HCT116 (cell line): ENCODE measurements at regions of chr15 and their contacts with region 1.

Region 1: GRCh38 chr15:99059010-99059981 is 45.6 kb upstream of the SYNM start:
- DNase-seq: peak; percentile 6
- ATAC-seq: peak; percentile 96
- H3K4me3 ChIP-seq: peak overlapping the region; percentile 28 to 39; a peak in 2 of 4 replicates
- H3K27ac ChIP-seq: no peak overlapping the region
- H3K4me1 ChIP-seq: peaks cover 0 to 9% of the 10 kb centered on the region in 2 experiments; a peak in 1 of 4 replicates
- H3K27me3 ChIP-seq: peaks cover 5% of the 10 kb centered on the region; the same call in 1 of the 2 replicates
- CTCF ChIP-seq: peak; percentile 14 to 58 (median 57); a peak in 4 of 6 replicates
- POLR2A ChIP-seq: no peak
- RAD21 ChIP-seq: peak; percentile 43

Region 2: DNA sequence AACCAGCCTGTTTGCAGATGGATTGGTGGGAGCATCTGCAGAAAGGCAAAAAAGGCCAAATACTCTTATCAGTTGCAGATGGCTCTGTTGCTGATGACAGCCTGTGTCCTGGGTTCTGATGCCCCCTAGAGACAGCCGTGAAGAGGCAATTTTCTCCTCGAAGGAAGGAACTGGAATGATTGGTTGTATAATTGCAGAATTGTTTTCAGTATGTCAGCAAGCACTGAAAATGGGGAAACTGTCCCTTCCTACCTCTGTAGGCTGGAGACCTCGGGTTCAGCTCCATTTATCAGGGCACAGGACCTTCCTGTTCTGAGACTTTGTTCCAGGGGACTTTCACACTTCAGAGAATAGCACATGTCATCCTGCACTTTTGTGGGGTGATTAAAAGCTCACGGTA is 154.8 kb before region 1 on chr15:
- CTCF ChIA-PET with region 1: no interaction called
- POLR2A ChIA-PET with region 1: no interaction called
- RAD21 ChIA-PET with region 1: no interaction called
- intact Hi-C with region 1: loop called (anchors 10 kb)
- DNase-seq: peak; percentile 18
- ATAC-seq: peak; percentile 92
- H3K4me3 ChIP-seq: no peak overlapping the region
- H3K27ac ChIP-seq: no peak overlapping the region
- H3K4me1 ChIP-seq: peaks cover 0 to 11% of the 10 kb centered on the region in 2 experiments; a peak in 2 of 4 replicates
- H3K27me3 ChIP-seq: no peaks in the 10 kb centered on the region
- CTCF ChIP-seq: peak; percentile 60 to 77 (median 73); a peak in 5 of 6 replicates
- POLR2A ChIP-seq: no peak
- RAD21 ChIP-seq: peak; percentile 77

Region 3: GRCh38 chr15:99076552-99077308 is 17.4 kb after region 1 on chr15:
- CTCF ChIA-PET with region 1: interaction called, 11 read pairs
- POLR2A ChIA-PET with region 1: no interaction called
- RAD21 ChIA-PET with region 1: no interaction called
- intact Hi-C with region 1: no loop called
- DNase-seq: peak; percentile 68
- ATAC-seq: peak; percentile 96
- H3K4me3 ChIP-seq: peak overlapping the region; percentile 14 to 48; a peak in 3 of 4 replicates
- H3K27ac ChIP-seq: no peak overlapping the region
- H3K4me1 ChIP-seq: peaks cover 0 to 2% of the 10 kb centered on the region in 2 experiments; a peak in 2 of 4 replicates
- H3K27me3 ChIP-seq: no peaks in the 10 kb centered on the region
- CTCF ChIP-seq: peak; percentile 80 to 88 (median 83)
- POLR2A ChIP-seq: no peak
- RAD21 ChIP-seq: peak; percentile 96

Region 4: DNA sequence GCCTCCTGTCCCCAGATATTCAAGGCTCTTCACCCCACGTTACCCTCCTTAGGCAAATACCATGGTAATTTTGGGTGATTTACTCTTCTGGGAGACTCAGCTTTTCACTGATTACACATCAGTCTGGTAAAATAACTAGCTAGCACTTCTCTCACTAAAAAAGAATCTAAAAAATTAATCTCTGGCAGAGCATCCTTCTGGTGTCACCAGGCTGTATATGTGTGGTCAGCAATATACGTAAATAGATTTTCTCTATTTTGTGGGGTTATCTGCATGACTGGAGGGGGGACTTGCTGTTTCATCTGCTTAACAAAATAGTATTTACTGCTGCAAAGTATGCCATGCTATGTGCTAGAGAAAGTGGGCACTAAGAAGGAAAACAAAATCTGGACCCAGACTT is 237.1 kb after region 1 on chr15:
- CTCF ChIA-PET with region 1: no interaction called
- POLR2A ChIA-PET with region 1: no interaction called
- RAD21 ChIA-PET with region 1: no interaction called
- intact Hi-C with region 1: no loop called
- DNase-seq: no peak
- ATAC-seq: no peak
- H3K4me3 ChIP-seq: no peak overlapping the region
- H3K27ac ChIP-seq: no peak overlapping the region
- H3K4me1 ChIP-seq: no peaks in the 10 kb centered on the region
- H3K27me3 ChIP-seq: no peaks in the 10 kb centered on the region
- CTCF ChIP-seq: no peak
- POLR2A ChIP-seq: no peak
- RAD21 ChIP-seq: no peak